ENCODE measurements at regions of chr1 and their contacts with region 1.

Region 1: GRCh38 chr1:43529206-43529731 is 1.4 kb upstream of the PTPRF start:
- DNase-seq: peak; percentile 60 to 97 (median 84)

Region 2: GRCh38 chr1:43405219-43405875 is 123.9 kb before region 1 on chr1:
- intact Hi-C with region 1: no loop called
- DNase-seq: no peak

Region 3: DNA sequence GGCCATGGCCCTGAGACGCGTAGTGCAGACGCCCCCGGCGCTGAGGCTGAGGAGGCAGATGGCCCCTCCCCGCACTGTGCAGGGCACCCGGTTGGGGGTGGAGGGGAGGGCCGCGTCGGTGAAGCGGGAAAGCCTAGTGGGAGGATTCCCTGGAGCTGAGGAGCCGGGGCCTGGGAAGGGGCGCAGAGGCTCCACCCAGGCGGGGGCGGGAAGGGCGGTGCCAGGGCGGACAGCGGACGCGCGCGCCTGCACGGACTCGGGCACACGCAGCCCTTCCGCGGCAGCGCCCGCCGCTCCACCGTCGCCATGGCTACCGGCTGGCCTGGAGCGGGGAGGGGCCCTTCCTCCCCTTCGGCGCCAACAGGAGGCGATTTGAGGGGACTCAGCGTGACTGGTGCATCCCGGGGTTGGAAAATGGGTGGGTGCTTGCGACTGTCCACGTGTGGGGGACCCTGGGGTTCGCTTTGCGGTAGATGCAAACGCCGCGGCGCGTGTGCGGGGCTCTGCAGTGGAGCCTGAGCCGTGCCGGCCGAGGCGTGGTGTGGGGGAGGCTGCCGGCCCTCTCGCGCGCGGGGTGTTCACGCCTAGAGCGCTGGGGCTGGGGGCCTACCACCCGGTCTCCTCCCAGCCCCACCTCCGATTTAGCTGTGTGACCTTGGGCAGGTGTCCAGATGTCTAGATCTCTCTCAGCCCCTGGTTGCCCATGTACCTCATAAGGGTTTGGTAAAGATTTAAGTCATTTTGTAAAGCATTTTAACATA is 36.5 kb after region 1 on chr1:
- intact Hi-C with region 1: loop called (anchors 5 kb)
- DNase-seq: peak; percentile 60 to 97 (median 74)

Region 4: DNA sequence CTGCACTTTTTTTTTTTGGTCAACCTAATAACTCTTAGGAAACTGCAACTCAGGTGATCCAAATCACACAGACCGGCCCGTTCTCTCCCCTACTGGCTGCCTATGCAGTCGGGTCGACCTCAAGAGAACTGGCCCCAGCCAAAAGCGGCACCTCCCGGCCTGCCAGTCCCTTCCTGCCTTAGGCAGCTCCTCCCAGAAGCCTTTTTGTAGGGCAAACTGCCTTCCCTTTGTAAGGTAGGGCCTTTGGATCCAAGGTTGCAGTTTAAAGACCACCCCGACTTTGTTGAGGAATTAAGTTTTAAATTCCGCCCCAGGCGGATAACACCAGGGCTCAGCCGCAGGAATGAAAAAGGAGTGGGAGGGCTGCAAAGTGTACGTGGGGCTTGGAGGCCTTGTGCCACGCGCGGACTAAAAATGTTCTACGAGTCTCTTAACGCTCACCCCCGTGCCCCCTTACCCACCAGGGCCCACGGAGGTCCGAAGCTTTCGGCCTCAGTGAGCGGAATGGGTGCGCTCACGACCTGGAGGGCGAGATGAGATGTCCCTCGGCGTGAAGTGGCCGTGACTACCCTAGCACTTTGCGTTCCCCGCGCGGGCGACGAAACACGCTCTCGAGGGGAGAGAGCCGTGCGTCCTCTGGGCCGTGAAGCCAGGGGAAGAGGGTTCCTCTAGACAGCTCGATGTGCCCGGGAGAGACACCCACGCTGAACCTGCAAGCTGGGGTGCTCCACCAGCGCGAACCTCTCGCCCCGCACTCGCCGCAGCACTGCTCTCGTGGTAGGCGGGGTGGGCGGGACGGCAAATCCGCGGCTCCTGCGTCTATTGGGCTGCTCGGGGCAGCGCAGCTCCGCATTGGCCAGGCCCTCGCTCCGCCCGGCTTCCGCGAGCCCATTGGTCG is 177.6 kb after region 1 on chr1:
- intact Hi-C with region 1: loop called (anchors 1 kb)
- DNase-seq: peak; percentile 86 to 99 (median 94)

Region 5: GRCh38 chr1:43934101-43934985 is 405.1 kb after region 1 on chr1:
- intact Hi-C with region 1: loop called (anchors 5 kb)
- DNase-seq: peak in 8 of 10 donors; percentile 66 to 95 (median 70)